H1 (cell line): ENCODE measurements at regions of chr12 and their contacts with region 1.

Region 1: GRCh38 chr12:4011597-4011996 is 138.4 kb upstream of the PARP11 start:
- DNase-seq: no peak
- H3K4me3 ChIP-seq: no peak overlapping the region
- H3K27ac ChIP-seq: no peak overlapping the region
- H3K4me1 ChIP-seq: no peaks in the 10 kb centered on the region
- H3K27me3 ChIP-seq: no peaks in the 10 kb centered on the region
- CTCF ChIP-seq: no peak
- EP300 ChIP-seq: no peak
- POLR2A ChIP-seq: no peak
- RAD21 ChIP-seq: no peak

Region 2: GRCh38 chr12:3988519-3989448 is 22.8 kb before region 1 on chr12:
- CTCF ChIA-PET with region 1: interaction called, 56 read pairs
- POLR2A ChIA-PET with region 1: no interaction called
- DNase-seq: no peak
- H3K4me3 ChIP-seq: no peak overlapping the region
- H3K27ac ChIP-seq: no peak overlapping the region
- H3K4me1 ChIP-seq: no peaks in the 10 kb centered on the region; a peak in 1 of 7 replicates
- H3K27me3 ChIP-seq: no peaks in the 10 kb centered on the region
- CTCF ChIP-seq: no peak
- EP300 ChIP-seq: no peak
- POLR2A ChIP-seq: no peak
- RAD21 ChIP-seq: no peak

Region 3: DNA sequence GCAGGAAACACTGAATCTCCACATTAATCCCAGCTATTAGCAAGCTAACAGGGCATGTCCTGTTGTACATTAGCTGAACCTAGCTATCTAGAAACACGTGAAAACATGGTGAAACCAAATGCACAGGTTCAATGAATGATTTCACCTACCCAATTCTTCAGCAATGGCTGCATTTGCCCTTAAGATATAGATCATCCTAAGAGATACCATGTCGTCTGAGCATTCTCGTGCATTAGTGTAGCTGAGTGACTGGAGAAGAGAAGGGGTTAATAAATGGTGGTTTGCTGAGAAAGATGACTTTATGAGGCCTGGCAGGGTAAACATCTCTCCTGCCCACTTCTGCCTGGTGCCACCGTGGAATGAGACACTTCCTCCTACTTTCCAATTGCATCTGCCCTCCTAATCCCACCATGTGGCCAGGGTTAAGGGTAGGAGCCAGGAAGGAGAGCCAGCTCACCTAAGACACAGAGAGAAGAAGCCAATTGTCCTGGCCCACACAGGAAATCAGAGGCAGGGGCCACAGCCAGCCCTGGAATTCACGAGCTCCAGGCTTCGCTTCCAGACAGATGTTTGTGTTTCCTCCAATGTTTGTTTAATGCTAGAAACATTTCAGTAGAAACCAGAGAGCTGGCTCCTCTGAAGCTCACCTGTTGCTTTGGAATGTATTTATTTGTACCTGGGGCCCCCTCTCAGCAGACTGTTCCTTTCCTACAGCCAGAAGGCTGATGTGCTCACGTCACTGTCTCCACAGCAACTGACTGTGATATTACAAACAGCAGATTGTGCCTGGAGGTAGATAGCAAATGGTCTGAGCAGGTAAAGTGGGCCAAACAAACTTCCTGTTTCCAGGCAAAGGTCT is 12.4 kb before region 1 on chr12:
- CTCF ChIA-PET with region 1: interaction called, 56 read pairs
- POLR2A ChIA-PET with region 1: interaction called, 3 read pairs
- DNase-seq: no peak
- H3K4me3 ChIP-seq: no peak overlapping the region
- H3K27ac ChIP-seq: no peak overlapping the region
- H3K4me1 ChIP-seq: 0 out of 7 replicates have a peak, but pooled peaks cover 0 to 2% (median 0%) of the 10 kb centered on the region in 4 experiments
- H3K27me3 ChIP-seq: peaks cover 0 to 3% (median under 1%) of the 10 kb centered on the region in 4 experiments; a peak in 1 of 7 replicates
- CTCF ChIP-seq: no peak
- EP300 ChIP-seq: no peak
- POLR2A ChIP-seq: no peak
- RAD21 ChIP-seq: no peak

Region 4: GRCh38 chr12:4025417-4026358 is 14.1 kb after region 1 on chr12:
- CTCF ChIA-PET with region 1: interaction called, 4 read pairs
- POLR2A ChIA-PET with region 1: interaction called, 10 read pairs
- DNase-seq: peak; percentile 78 to 89
- H3K4me3 ChIP-seq: peak overlapping the region; percentile 11 to 41 (median 29); a peak in 7 of 8 replicates
- H3K27ac ChIP-seq: peak overlapping the region; percentile 80
- H3K4me1 ChIP-seq: peaks cover 20 to 37% (median 34%) of the 10 kb centered on the region in 4 experiments
- H3K27me3 ChIP-seq: peaks cover 2 to 10% (median 2%) of the 10 kb centered on the region in 4 experiments; a peak in 5 of 7 replicates
- CTCF ChIP-seq: no peak
- EP300 ChIP-seq: peak in 1 of 2 experiments; percentile 55; a peak in 1 of 3 replicates
- POLR2A ChIP-seq: no peak
- RAD21 ChIP-seq: no peak